AG04449 (cell line): ENCODE measurements at regions of chr16 and their contacts with region 1.

Region 1: DNA sequence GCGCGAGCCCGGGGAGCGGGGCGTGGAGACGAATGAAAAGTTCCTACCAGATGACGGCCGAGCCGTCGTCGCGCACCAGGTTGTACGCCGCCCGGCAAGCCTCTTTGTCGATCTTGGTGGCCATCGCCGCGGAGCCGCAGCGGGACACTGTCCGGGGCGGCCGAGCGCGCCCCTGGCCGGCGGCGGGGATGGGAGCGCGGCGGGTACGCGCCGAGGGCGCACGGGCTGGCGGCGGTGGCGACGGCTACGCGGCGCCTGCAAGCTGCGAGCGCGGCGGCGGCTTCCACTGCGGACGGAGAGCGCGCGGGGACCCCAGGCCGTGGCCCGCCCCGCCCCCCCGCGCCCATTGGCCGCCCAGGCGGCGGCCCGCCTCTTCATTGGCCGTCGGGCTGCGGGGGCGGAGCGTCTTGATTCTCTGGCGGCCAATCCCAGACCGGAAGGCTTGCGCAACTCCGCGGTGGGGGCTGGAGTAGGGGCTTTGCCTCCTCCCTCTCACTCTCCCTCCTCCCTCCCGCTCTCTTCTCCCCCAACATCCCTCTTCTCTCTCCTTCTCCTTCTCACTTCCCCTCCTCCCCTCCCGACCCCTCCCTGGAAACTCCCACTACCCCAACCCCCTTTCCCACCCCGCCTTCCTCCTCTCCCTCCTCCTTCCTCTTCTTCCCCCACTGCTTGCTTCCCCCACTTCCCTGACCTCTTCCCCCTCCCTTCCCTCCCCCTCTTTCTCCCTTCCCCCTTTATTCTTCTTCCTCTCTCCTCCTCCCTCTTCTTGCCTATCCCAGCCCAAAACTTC is at the start of gene COTL1:
- DNase-seq: peak; percentile 90
- H3K4me3 ChIP-seq: peak within 1 kb of the TSS; percentile 65
- CTCF ChIP-seq: no peak

Region 2: DNA sequence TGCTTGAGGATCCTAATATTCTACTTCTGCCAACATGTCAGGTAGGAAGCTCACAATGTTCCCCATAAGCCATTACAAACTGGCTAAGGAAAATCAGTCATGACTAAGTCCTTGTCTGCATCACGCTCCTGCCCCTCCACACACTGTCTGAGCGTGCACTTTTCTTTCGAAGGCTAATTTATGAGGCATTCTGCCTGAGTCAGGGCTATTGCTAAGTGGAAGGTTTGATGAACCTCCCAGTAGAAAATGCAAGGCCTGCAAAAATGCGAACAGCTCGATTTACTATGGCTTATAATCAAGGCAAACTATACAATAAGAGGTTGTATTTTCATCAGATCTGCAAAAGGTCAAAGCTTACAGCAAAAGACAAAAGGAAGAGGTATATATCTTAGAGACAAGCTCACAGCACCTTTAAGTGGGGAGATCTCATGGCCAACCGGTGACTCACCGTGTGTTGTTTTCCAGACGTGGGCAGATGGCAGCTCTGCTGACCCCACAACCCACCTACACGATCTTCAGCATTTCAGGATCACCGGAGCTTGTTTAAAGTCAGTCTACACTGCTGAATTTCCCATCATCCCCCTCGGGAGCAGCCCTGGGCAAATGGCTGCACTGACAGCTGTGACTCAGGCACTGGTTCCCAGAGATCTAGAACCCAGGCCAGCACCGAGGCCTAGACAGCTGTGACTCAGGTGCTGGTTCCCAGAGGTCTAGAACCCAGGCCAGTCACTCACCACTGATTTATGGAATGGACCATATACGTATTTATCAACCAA is 139.6 kb before region 1 on chr16:
- CTCF ChIA-PET with region 1: interaction called, 11 read pairs
- POLR2A ChIA-PET with region 1: no interaction called
- DNase-seq: no peak
- H3K4me3 ChIP-seq: no peak overlapping the region
- CTCF ChIP-seq: no peak

Region 3: DNA sequence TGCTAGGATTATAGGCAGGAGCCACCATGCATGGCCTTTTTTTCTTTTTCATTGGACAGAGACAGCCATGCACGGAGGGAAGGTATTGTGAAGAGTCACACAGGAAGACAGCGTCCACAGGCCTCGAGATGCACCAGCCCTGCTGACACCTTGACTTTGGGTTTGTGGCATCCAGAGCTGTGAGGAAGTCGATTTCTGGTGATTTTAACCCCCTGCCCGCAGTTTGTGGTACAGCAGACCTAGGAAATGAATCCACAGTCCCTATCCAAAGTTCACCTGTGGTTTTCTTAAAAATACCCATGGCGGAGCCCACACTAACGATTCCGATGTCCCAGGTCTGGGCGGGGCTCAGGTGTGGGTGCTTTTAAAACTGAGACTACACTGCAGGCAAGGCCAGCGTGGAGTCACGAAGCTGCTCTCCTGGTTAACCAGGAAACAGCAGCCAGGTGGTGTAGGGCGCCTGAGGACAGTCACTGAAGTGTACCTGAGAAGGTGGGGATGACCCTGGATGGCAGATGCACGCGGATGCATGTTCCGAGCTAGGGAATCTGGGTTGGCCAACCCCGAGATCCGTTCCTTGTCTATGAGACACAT is 99.1 kb before region 1 on chr16:
- CTCF ChIA-PET with region 1: interaction called, 446 read pairs
- POLR2A ChIA-PET with region 1: interaction called, 17 read pairs
- DNase-seq: no peak
- H3K4me3 ChIP-seq: no peak overlapping the region
- CTCF ChIP-seq: no peak

Region 4: GRCh38 chr16:84599521-84600202 is 18.3 kb before region 1 on chr16:
- CTCF ChIA-PET with region 1: interaction called, 12 read pairs
- POLR2A ChIA-PET with region 1: interaction called, 61 read pairs
- DNase-seq: peak; percentile 47
- H3K4me3 ChIP-seq: peak overlapping the region; percentile 31
- CTCF ChIP-seq: no peak

Region 5: DNA sequence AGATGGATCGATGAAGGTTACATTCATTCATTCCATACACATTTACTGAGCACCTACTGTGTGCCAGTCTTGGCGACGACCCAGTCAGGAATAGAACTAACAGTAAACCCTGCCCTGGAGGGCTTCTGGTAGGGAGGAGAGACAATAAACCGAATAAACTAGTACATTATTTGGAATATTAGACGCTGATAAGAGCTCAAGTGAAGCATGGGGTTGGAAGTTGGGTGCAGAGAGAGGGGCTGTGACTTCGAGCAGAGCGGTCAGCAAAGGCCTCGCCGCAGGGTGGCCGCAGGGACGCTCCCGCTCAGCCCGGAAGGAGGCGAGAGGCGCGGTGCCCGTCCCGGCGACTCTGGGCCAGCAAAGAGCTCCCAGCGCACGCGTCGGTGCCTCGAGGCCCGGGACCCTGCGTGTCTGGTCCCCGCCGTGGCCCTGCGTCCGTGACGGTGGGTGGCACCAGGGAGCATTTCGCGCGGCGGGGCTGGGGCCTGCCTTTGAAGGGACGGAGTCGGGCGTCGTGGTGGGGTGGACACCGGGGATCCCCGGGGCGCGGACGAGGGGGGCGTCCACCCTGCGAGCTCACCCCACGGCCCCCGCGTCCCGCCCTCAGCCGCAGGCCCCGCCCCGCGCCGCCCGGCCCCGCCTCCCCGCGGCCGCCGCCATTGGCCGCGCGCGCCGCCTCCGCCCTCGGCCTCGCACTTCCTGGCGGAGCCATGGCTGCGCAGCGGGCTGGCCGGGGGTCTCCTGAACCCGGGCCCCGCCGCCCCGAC is 30.0 kb after region 1 on chr16 and contains the start of gene KLHL36:
- CTCF ChIA-PET with region 1: interaction called, 38 read pairs
- POLR2A ChIA-PET with region 1: interaction called, 3 read pairs
- DNase-seq: no peak
- H3K4me3 ChIP-seq: peak within 1 kb of the TSS; percentile 68
- CTCF ChIP-seq: no peak

Region 6: DNA sequence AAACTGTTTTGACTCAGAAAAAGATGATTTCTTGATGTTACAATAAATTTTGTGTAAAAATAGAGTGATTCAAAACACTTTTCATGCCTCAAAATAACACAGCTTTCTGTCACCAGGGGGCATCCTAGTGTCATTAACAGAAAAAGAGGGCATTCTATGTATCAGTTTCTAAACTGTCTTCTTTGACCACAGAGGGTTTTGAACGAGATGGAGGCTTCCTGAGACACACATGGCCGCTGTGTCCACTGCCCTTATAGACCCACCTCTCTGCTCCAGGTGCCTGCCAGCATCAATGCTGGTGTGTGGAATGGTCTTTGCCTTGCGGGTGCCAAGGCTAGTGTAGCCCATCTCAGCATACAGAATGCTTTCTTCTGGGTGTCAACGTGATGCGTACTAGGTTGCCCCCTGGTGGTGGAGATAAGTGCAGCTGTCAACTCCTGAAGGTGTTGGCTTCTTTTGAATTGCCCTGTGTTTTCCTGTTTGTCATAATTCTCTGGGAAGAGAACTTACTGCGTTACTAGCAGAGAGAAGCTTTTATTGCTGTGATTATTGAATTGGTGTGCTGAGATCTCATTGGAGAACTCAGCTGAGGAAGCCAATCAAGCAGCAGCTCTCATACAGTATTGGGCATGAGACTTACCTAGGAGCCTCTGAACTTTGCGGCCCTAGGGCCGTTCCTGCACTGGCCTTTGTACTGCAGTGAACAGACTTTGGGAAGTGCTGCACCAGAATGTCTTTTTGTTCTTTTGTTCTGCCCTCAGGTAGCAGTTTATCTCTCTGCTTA is 120.5 kb after region 1 on chr16:
- CTCF ChIA-PET with region 1: interaction called, 185 read pairs
- POLR2A ChIA-PET with region 1: no interaction called
- DNase-seq: no peak
- H3K4me3 ChIP-seq: no peak overlapping the region
- CTCF ChIP-seq: peak; percentile 82